Vagina (tissue), 2 donors: ENCODE measurements at regions of chr12 and their contacts with region 1.

Region 1: GRCh38 chr12:45215419-45216229 is at the start of gene ANO6:
- DNase-seq: peak in 1 of 2 donors; percentile 94
- H3K4me3 ChIP-seq: peak within 1 kb of the TSS; percentile 82 to 94
- H3K27ac ChIP-seq: peak within 1 kb of the TSS; percentile 97
- H3K4me1 ChIP-seq: peaks cover 31% of the 10 kb centered on the region
- H3K27me3 ChIP-seq: no peaks in the 10 kb centered on the region
- CTCF ChIP-seq: peak in 1 of 3 experiments; percentile 16
- POLR2A ChIP-seq: peak in 1 of 2 donors; percentile 75
- total RNA-seq, gene ANO6: 48.4 TPM

Region 2: DNA sequence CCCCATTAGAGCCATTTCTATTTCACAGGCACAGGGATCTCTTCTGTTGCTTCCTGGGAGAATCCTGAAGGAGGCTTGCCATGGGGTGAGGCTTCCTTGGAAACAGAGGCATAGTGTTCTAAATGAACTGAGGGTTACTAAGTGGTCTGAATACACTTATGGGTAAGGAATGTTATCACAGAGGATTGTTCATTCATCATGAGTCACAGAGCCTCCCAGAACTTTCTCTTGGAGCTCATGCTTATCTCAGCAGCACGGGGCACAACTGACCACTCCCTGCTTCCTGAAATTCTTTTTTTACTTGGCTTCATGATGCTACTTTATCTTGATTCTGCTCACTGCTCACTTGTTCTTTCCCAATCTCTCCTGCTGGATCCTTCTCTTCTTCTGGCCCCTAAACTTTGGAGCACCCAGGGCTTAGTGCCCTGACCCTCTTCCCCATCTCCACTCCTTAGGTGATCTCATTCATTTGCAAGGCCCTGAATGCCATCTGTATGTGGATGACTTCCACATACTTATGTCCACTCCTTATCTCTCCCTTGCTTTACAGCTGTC is 58.2 kb after region 1 on chr12:
- intact Hi-C with region 1: loop called (anchors 10 kb)
- DNase-seq: no peak
- H3K4me3 ChIP-seq: no peak overlapping the region
- H3K27ac ChIP-seq: peak overlapping the region; percentile 53
- H3K4me1 ChIP-seq: peaks cover 21% of the 10 kb centered on the region
- H3K27me3 ChIP-seq: no peaks in the 10 kb centered on the region
- CTCF ChIP-seq: no peak
- POLR2A ChIP-seq: no peak

Region 3: DNA sequence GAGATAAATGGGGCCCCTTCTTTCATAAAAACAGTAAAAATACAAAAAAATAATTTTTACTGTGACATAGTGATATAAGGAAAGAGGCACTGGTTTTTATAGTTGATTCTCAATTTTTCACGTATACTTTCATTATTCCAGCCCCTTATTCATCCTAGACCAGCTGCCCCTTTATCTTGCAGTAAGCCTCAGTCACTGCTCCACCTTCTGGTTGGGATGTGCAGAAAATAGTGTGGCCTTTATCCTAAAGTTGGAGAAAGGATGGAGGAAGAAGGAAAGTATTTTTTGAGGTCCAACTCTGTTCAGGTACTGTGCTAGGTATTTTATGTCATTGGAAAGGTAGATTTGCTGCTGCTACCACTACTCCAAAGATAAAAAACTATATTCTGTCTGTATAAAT is 172.9 kb after region 1 on chr12:
- intact Hi-C with region 1: loop called (anchors 10 kb)
- DNase-seq: no peak
- H3K4me3 ChIP-seq: no peak overlapping the region
- H3K27ac ChIP-seq: no peak overlapping the region
- H3K4me1 ChIP-seq: no peaks in the 10 kb centered on the region
- H3K27me3 ChIP-seq: no peaks in the 10 kb centered on the region
- CTCF ChIP-seq: peak in 2 of 3 experiments; percentile 41 to 60
- POLR2A ChIP-seq: no peak